ENCODE measurements at regions of chr3 and their contacts with region 1.

Region 1: DNA sequence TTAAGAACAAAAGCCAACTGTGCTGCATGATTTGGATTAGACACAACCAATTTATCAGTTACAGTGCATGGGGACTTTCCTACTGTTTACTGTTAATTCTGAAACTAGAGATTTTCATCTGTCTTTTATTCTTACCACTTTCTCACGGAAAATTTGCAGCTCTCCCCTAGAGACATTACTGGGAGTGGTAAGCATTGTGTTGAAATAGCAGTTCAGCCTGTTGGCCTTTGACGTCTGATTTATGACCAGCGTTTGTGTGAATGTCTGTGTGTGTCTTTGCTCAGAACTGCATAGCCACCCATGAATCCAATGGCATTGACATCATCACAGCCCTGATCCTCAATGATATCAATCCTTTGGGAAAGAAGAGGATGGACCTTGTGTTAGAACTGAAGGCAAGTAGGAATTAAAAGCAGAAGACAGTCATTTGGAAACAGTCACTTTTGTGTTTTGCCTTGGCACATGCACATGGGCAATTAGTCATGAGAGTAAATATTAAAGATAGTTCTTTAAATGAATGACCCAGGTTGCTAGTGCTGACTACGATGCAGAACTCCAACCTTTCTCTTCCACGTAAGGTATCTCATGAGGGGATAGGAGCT is 202.2 kb upstream of the BHLHE40 start:
- DNase-seq: peak; percentile 79
- H3K4me3 Mint-ChIP-seq: no peak overlapping the region
- H3K27ac Mint-ChIP-seq: peak overlapping the region; percentile 80
- H3K4me1 Mint-ChIP-seq: peaks cover 11% of the 10 kb centered on the region
- H3K27me3 Mint-ChIP-seq: no peaks in the 10 kb centered on the region
- CTCF ChIP-seq: no peak

Region 2: GRCh38 chr3:4765212-4765611 is 11.9 kb before region 1 on chr3:
- CTCF ChIA-PET with region 1: no interaction called
- POLR2A ChIA-PET with region 1: interaction called, 13 read pairs
- intact Hi-C with region 1: no loop called
- DNase-seq: no peak
- H3K4me3 Mint-ChIP-seq: no peak overlapping the region
- H3K27ac Mint-ChIP-seq: no peak overlapping the region
- H3K4me1 Mint-ChIP-seq: no peaks in the 10 kb centered on the region
- H3K27me3 Mint-ChIP-seq: no peaks in the 10 kb centered on the region
- CTCF ChIP-seq: no peak

Measured in MCF 10A (cell line).